Caco-2 (cell line): ENCODE measurements at regions of chr5 and their contacts with region 1.

Region 1: DNA sequence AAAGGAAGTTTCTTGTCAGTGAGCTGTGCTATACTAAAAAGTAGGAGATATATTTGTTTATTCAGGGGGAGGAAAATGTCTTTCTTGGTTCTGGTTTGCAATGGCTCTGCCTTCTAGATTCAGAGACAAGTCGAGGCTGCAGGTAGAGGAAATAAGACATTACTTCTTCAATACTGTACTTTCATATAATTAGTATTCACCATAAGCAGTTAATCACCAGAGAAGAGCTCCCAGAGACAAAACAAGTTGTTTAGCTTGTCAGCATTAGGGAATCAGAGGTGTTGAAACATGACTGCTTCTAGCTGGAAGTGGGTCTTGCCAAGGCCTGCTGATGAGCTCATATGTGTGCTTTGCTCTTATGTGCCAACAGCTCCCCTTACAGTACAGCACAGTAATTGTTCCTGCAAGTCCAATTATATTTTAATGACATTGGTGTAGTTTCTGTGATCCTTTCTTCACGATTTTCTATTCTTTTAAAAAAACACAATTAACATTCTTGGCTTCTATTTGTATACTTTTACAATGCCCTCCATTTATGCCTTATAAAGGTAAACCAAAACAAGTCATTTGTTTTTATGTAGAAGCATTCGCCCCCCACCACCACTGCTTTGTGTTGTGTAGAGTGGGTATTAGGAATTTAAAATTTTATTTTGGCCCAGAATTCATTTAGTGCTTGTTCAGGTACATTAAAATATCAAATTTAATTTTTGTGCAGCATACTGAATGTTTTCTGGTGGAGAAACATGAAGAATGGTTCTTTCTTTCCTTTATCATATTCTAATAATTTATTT is 112.2 kb downstream of the RPS23 start:
- DNase-seq: peak; percentile 53 to 55
- H3K4me3 ChIP-seq: no peak overlapping the region
- H3K4me3 Mint-ChIP-seq: no peak overlapping the region
- H3K27ac Mint-ChIP-seq: no peak overlapping the region
- H3K4me1 ChIP-seq: peaks cover 5% of the 10 kb centered on the region
- H3K4me1 Mint-ChIP-seq: peaks cover 7% of the 10 kb centered on the region
- H3K27me3 ChIP-seq: no peaks in the 10 kb centered on the region
- H3K27me3 Mint-ChIP-seq: no peaks in the 10 kb centered on the region
- CTCF ChIP-seq: peak; percentile 57 to 63

Region 2: DNA sequence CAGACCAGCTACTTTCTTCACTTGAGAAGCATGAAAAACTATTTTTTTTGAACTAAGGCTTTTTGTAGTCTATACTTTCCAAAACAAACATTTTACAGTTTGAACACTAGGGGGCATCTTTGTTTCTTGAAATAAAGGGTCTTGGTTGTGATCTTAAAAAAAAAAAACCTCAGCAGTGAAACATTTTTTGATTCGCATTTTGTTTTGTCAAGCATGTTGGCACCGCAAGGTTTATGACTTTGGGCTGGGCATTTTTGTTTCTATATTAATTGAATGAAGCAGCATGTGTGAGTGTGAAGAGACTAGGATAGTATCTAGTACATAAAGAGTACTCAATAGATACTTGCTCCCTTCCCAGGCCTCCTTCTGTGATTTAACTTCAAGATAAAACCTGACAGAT is 740.4 kb before region 1 on chr5:
- CTCF ChIA-PET with region 1: interaction called, 3 read pairs
- POLR2A ChIA-PET with region 1: no interaction called
- intact Hi-C with region 1: loop called (anchors 5 kb)
- DNase-seq: peak in 1 of 2 experiments; percentile 25
- H3K4me3 ChIP-seq: no peak overlapping the region
- H3K4me3 Mint-ChIP-seq: no peak overlapping the region
- H3K27ac Mint-ChIP-seq: no peak overlapping the region
- H3K4me1 ChIP-seq: peaks cover 19% of the 10 kb centered on the region
- H3K4me1 Mint-ChIP-seq: peaks cover 19% of the 10 kb centered on the region
- H3K27me3 ChIP-seq: no peaks in the 10 kb centered on the region
- H3K27me3 Mint-ChIP-seq: no peaks in the 10 kb centered on the region
- CTCF ChIP-seq: peak; percentile 45 to 57

Region 3: DNA sequence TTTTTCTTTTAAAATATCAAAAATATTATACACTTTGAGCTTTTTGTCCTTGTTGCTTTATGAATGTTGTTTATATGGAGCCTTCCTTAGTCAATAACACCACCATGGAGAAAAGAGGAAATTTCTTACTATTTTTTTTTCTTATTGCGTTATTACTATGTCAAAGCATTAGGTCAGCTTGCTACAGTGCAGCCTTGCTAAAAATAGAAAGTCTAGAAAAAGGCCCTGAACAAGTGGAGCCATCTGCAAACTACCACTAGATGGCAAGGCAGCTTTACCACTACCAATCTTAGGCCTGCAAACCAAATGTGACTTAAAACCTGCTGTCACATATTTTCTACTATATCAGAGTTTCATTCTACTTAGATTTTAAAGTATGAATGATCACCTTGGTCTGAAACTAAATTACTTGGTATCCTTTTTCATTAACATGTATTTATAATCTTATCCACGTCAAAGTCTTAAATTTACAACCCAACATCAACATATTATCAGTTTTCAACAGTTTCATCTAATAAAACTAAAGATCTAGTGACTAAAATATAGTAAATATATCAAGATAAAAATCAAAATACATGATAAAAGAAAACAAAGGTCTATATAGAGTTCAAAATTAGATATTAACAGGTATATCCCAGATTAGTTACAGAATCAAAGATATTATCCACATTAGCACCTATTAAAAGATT is 658.9 kb before region 1 on chr5:
- CTCF ChIA-PET with region 1: no interaction called
- POLR2A ChIA-PET with region 1: no interaction called
- intact Hi-C with region 1: loop called (anchors 1 kb)
- DNase-seq: peak; percentile 47 to 63
- H3K4me3 ChIP-seq: no peak overlapping the region
- H3K4me3 Mint-ChIP-seq: no peak overlapping the region
- H3K27ac Mint-ChIP-seq: no peak overlapping the region
- H3K4me1 ChIP-seq: no peaks in the 10 kb centered on the region; the same call in 1 of the 2 replicates
- H3K4me1 Mint-ChIP-seq: peaks cover 7% of the 10 kb centered on the region
- H3K27me3 ChIP-seq: no peaks in the 10 kb centered on the region
- H3K27me3 Mint-ChIP-seq: peaks cover 2% of the 10 kb centered on the region
- CTCF ChIP-seq: peak; percentile 65 to 96

Region 4: GRCh38 chr5:81606150-81606549 is 559.8 kb before region 1 on chr5:
- CTCF ChIA-PET with region 1: no interaction called
- POLR2A ChIA-PET with region 1: no interaction called
- intact Hi-C with region 1: no loop called
- DNase-seq: no peak
- H3K4me3 ChIP-seq: no peak overlapping the region
- H3K4me3 Mint-ChIP-seq: no peak overlapping the region
- H3K27ac Mint-ChIP-seq: no peak overlapping the region
- H3K4me1 ChIP-seq: no peaks in the 10 kb centered on the region
- H3K4me1 Mint-ChIP-seq: no peaks in the 10 kb centered on the region
- H3K27me3 ChIP-seq: no peaks in the 10 kb centered on the region
- H3K27me3 Mint-ChIP-seq: no peaks in the 10 kb centered on the region
- CTCF ChIP-seq: no peak

Region 5: GRCh38 chr5:81751009-81751835 is 414.7 kb before region 1 on chr5 and contains the start of gene SSBP2:
- CTCF ChIA-PET with region 1: interaction called, 3 read pairs
- POLR2A ChIA-PET with region 1: no interaction called
- intact Hi-C with region 1: loop called (anchors 2 kb)
- DNase-seq: peak; percentile 98
- H3K4me3 ChIP-seq: peak within 1 kb of the TSS; percentile 86
- H3K4me3 Mint-ChIP-seq: peak within 1 kb of the TSS; percentile 86
- H3K27ac Mint-ChIP-seq: peak within 1 kb of the TSS; percentile 10
- H3K4me1 ChIP-seq: peaks cover 21% of the 10 kb centered on the region
- H3K4me1 Mint-ChIP-seq: peaks cover 11% of the 10 kb centered on the region
- H3K27me3 ChIP-seq: no peaks in the 10 kb centered on the region
- H3K27me3 Mint-ChIP-seq: peaks cover 8% of the 10 kb centered on the region
- CTCF ChIP-seq: no peak
- total RNA-seq, gene SSBP2: 2.5 and 3.3 TPM in 2 replicates

Region 6: GRCh38 chr5:81787474-81788242 is 378.3 kb before region 1 on chr5:
- CTCF ChIA-PET with region 1: interaction called, 5 read pairs
- POLR2A ChIA-PET with region 1: no interaction called
- intact Hi-C with region 1: loop called (anchors 1 kb)
- DNase-seq: no peak
- H3K4me3 ChIP-seq: no peak overlapping the region
- H3K4me3 Mint-ChIP-seq: no peak overlapping the region
- H3K27ac Mint-ChIP-seq: no peak overlapping the region
- H3K4me1 ChIP-seq: no peaks in the 10 kb centered on the region
- H3K4me1 Mint-ChIP-seq: no peaks in the 10 kb centered on the region
- H3K27me3 ChIP-seq: no peaks in the 10 kb centered on the region
- H3K27me3 Mint-ChIP-seq: no peaks in the 10 kb centered on the region
- CTCF ChIP-seq: no peak

Region 7: DNA sequence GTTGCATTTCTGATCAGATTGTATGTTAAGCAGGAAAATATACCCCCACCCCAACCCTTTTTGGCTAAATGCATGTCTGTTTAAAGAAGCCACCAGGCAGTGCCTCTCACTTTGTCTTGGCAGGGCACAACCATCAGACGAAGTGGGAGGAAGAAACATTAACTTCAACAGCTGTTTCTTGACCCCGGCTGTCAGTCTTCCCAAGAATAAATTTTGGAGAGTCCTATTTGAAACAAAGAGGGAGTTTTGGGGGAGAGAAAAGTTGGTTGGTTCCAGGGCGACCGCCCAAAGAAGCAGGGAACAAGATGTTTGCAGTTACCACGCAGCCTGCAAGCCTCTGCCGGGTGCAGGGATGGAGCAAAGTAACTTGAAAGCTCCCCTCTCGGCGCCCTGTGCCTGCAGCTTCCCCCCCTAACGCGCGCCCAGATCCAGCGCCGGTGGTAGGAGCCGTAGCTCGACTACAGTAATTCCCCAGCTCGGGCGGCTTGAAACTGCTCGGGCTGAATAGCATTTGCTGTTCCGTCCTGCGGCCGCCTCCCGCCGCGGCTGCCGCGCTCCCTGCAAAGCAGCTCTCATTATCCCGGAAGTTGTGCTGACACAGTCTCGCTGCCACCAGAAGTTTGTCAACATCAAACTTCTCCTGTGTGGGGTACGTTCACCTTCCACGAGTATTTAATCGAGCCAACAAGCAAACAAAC is 314.3 kb before region 1 on chr5:
- CTCF ChIA-PET with region 1: interaction called, 5 read pairs
- POLR2A ChIA-PET with region 1: interaction called, 3 read pairs
- intact Hi-C with region 1: loop called (anchors 2 kb)
- DNase-seq: peak; percentile 92 to 95
- H3K4me3 ChIP-seq: peak overlapping the region; percentile 35
- H3K4me3 Mint-ChIP-seq: peak overlapping the region; percentile 86
- H3K27ac Mint-ChIP-seq: peak overlapping the region; percentile 95
- H3K4me1 ChIP-seq: peaks cover 8% of the 10 kb centered on the region
- H3K4me1 Mint-ChIP-seq: peaks cover 11% of the 10 kb centered on the region
- H3K27me3 ChIP-seq: no peaks in the 10 kb centered on the region
- H3K27me3 Mint-ChIP-seq: no peaks in the 10 kb centered on the region
- CTCF ChIP-seq: no peak

Region 8: GRCh38 chr5:82107267-82107666 is 58.7 kb before region 1 on chr5:
- CTCF ChIA-PET with region 1: interaction called, 9 read pairs
- POLR2A ChIA-PET with region 1: no interaction called
- intact Hi-C with region 1: loop called (anchors 2 kb)
- DNase-seq: no peak
- H3K4me3 ChIP-seq: no peak overlapping the region
- H3K4me3 Mint-ChIP-seq: no peak overlapping the region
- H3K27ac Mint-ChIP-seq: no peak overlapping the region
- H3K4me1 ChIP-seq: peaks cover 9% of the 10 kb centered on the region; the same call in 1 of the 2 replicates
- H3K4me1 Mint-ChIP-seq: peaks cover 14% of the 10 kb centered on the region
- H3K27me3 ChIP-seq: no peaks in the 10 kb centered on the region
- H3K27me3 Mint-ChIP-seq: no peaks in the 10 kb centered on the region
- CTCF ChIP-seq: peak; percentile 21 to 25

Region 9: GRCh38 chr5:82205005-82205404 is 39.1 kb after region 1 on chr5:
- CTCF ChIA-PET with region 1: no interaction called
- POLR2A ChIA-PET with region 1: no interaction called
- intact Hi-C with region 1: no loop called
- DNase-seq: no peak
- H3K4me3 ChIP-seq: no peak overlapping the region
- H3K4me3 Mint-ChIP-seq: no peak overlapping the region
- H3K27ac Mint-ChIP-seq: no peak overlapping the region
- H3K4me1 ChIP-seq: no peaks in the 10 kb centered on the region
- H3K4me1 Mint-ChIP-seq: no peaks in the 10 kb centered on the region
- H3K27me3 ChIP-seq: no peaks in the 10 kb centered on the region
- H3K27me3 Mint-ChIP-seq: no peaks in the 10 kb centered on the region
- CTCF ChIP-seq: no peak